ENCODE measurements at regions of chr20 and their contacts with region 1.

Region 1: DNA sequence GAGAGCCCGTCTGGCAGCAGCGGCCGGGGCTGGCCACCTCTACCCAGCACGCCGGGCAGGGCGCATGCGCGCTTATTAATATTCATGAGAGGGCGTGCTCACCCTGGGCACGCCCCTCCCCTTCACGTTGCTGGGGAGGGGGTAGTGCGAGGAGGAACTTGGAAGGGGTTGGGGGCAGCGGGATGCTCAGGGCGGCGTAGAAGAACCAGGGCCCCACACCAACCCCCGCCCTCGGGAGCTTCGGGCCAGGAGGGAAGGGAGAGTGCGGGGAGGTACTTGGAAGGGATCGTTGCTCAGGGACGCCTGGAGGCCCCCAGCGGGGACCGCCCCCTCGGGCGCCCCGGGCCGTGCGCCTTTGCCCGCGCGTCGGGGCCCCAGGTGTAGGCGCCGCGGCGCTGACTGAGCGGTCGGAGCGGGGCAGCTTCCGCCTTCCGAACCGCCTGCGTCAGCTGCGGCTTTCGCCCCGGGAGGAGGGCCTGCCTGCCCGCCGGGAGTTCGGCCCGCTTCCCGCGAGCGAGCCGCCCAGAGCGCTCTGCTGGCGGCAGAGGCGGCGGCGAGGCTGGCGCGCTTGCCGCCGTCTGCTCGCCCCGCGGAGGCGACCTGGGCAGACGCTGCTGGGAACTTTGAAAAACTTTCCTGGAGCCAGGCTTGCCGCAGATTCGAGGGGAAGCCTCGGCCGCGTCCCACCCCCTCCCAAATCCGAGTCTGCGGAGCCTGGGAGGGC is at the start of gene JAG1:
- DNase-seq: peak; percentile 94
- H3K4me3 ChIP-seq: peak within 1 kb of the TSS; percentile 91 to 95 (median 94)
- H3K27ac ChIP-seq: peak within 1 kb of the TSS; percentile 92
- H3K4me1 ChIP-seq: peaks cover 31% of the 10 kb centered on the region
- H3K27me3 ChIP-seq: no peaks in the 10 kb centered on the region
- CTCF ChIP-seq: no peak
- POLR2A ChIP-seq: peak; percentile 47
- total RNA-seq, gene JAG1: 31.7 and 37.0 TPM in 2 replicates

Region 2: DNA sequence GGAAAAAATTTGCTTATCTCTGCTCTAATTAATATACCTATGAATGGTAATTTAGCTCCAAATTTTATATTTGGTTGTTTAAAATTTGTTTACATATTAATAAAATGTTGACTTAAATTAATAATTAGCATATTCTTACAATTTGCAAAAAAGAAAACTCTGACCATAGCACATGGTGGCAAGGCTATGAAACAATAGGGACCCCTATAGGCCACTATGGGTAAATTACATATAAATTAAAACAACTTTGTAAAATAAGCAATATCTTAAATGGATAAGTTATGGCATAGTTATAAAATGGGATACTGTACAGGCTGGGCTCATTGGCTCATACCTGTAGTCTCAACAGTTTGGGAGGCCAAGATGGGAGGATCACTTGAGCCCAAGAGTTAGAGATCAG is 316.2 kb before region 1 on chr20:
- CTCF ChIA-PET with region 1: no interaction called
- POLR2A ChIA-PET with region 1: no interaction called
- dilution Hi-C with region 1: no loop called
- intact Hi-C with region 1: loop called (anchors 2 kb)
- DNase-seq: peak; percentile 37
- H3K4me3 ChIP-seq: no peak overlapping the region
- H3K27ac ChIP-seq: peak overlapping the region; percentile 45
- H3K4me1 ChIP-seq: peaks cover 44% of the 10 kb centered on the region
- H3K27me3 ChIP-seq: no peaks in the 10 kb centered on the region
- CTCF ChIP-seq: peak; percentile 13 to 25
- POLR2A ChIP-seq: no peak

Region 3: DNA sequence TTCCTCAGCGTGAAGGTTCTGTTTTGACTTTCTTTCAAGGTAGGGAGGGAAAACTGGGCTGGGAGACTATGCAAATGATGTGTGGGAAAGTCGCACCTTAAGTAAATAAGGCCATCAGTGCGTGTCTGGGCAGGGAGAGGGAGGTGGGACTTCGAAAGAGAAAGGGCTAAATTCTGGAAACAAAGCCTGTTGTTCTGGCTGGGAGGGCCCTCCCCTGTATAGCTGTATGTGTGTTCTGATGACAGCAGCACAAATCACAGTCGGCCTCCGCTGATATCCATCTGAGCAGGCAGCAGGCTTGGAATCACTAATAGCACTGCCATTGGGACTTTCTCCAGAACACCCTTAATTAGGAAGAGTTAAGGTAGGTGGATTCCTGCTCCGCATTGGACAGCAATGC is 19.5 kb before region 1 on chr20:
- CTCF ChIA-PET with region 1: interaction called, 20 read pairs
- POLR2A ChIA-PET with region 1: no interaction called
- dilution Hi-C with region 1: no loop called
- intact Hi-C with region 1: no loop called
- DNase-seq: peak; percentile 56
- H3K4me3 ChIP-seq: no peak overlapping the region
- H3K27ac ChIP-seq: peak overlapping the region; percentile 27
- H3K4me1 ChIP-seq: peaks cover 30% of the 10 kb centered on the region
- H3K27me3 ChIP-seq: no peaks in the 10 kb centered on the region
- CTCF ChIP-seq: no peak
- POLR2A ChIP-seq: no peak

Region 4: GRCh38 chr20:10961651-10962288 is 287.6 kb after region 1 on chr20:
- CTCF ChIA-PET with region 1: no interaction called
- POLR2A ChIA-PET with region 1: no interaction called
- dilution Hi-C with region 1: no loop called
- intact Hi-C with region 1: loop called (anchors 2 kb)
- DNase-seq: peak; percentile 75
- H3K4me3 ChIP-seq: no peak overlapping the region
- H3K27ac ChIP-seq: no peak overlapping the region
- H3K4me1 ChIP-seq: peaks cover 36% of the 10 kb centered on the region
- H3K27me3 ChIP-seq: no peaks in the 10 kb centered on the region
- CTCF ChIP-seq: no peak
- POLR2A ChIP-seq: no peak

Region 5: DNA sequence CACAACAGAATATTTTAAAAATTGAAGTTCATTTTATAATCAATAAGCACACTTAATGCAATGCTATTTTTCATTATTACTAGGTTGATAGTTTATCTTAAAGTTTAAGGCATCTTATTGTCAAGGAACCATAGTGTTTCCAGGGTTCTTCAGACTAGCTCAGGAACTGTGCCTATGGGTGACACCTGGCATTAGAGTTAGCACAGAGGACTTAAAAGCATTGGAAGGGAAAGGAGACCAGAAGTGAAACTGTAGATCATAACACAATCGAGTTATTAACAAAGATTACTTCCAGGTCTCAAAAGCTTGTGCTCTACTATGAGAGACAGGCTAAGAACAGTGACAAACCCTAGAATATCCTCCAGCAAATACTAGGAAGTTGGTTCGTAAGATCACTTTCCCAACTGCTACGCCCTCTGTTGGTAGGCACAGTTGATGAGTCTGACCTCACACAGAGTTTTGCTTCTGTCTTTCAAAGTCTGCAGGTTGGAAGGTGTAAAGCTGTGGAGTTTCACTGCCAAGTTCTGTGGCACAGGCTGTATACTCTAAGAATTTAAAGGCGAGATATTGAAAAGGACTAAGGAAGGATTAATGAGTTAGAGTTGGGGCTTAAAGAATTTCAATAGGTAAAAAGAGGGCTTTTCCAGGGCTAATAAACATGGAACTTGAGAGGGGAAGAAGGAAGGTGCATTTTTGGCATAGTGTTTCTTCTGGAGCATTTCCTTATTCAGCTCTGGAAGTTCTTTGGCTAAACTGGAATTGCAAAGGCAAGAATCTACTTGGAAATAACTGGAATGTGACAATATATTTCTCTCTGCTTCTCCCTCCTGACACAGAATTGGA is 531.0 kb after region 1 on chr20:
- CTCF ChIA-PET with region 1: interaction called, 55 read pairs
- POLR2A ChIA-PET with region 1: no interaction called
- dilution Hi-C with region 1: no loop called
- intact Hi-C with region 1: loop called (anchors 1 kb)
- DNase-seq: peak; percentile 79
- H3K4me3 ChIP-seq: no peak overlapping the region
- H3K27ac ChIP-seq: no peak overlapping the region
- H3K4me1 ChIP-seq: no peaks in the 10 kb centered on the region
- H3K27me3 ChIP-seq: no peaks in the 10 kb centered on the region
- CTCF ChIP-seq: peak; percentile 78 to 87
- POLR2A ChIP-seq: no peak

Region 6: DNA sequence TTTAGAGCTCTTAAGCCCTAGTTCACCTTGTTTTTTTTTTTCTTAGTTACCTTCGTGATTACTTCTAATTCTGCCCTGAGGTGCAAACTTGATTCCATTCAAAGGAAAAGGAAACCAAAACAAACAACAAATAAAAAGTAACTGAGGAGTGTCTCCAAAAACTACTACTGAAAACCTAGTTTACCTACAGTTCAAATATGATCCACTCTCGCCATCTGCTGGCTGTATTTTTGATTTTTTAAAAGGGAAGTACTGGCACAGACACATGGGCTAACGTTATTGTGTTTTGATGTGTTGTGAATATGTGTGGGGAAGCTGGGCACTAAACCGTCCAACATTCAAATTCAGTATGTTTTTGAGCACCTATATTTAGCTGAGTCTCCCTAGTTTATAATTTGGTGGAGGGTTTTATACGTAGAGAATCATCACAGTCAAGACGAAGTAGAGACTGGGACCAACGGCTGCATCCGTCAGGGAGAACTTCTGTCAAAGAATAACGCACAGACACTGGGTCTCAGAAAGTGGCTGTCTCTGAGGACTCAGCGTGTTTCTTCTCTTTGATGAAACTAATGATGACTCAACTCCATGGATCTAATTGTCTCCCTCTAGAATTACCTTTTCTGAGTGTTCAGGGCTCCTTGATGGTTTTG is 870.0 kb after region 1 on chr20:
- CTCF ChIA-PET with region 1: interaction called, 19 read pairs
- POLR2A ChIA-PET with region 1: no interaction called
- dilution Hi-C with region 1: no loop called
- intact Hi-C with region 1: loop called (anchors 1 kb)
- DNase-seq: peak; percentile 74
- H3K4me3 ChIP-seq: no peak overlapping the region
- H3K27ac ChIP-seq: no peak overlapping the region
- H3K4me1 ChIP-seq: peaks cover 9% of the 10 kb centered on the region
- H3K27me3 ChIP-seq: no peaks in the 10 kb centered on the region
- CTCF ChIP-seq: peak; percentile 16 to 44
- POLR2A ChIP-seq: no peak

Measured in endothelial cell of umbilical vein (primary cell).